Naive thymus-derived CD4-positive, alpha-beta T cell (primary cell): ENCODE measurements at regions of chr3 and their contacts with region 1.

Region 1: DNA sequence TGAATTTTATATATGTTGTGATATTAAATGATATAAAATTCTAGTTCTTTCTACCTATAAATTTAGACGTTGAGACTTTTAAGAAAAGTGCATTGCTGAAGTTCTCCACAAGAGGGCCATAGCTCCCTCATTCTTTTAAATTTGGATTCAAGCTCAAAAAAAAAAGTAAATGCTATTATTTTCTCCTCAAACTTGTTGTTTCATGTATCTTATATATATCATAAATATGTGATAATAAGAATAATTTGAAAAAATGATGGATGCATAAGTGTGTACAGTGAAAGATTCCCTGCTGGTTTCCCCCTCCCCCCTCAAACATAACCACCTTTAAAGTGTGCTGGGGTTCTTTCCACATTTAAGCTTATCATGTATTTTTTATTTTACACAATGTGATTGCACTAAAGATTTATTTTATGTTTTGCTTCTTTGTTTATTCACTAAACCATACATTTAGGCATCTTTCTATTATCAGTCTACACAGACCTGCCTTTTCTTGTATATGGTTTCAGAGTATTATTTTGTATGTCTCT is 769.4 kb upstream of the GOLIM4 start:
- DNase-seq: no peak
- ATAC-seq: no peak
- H3K4me3 ChIP-seq: no peak overlapping the region
- H3K4me3 Mint-ChIP-seq: no peak overlapping the region
- H3K27ac ChIP-seq: no peak overlapping the region
- H3K27ac Mint-ChIP-seq: no peak overlapping the region
- H3K4me1 ChIP-seq: no peaks in the 10 kb centered on the region
- H3K4me1 Mint-ChIP-seq: peaks cover 0 to 1% (median 0%) of the 10 kb centered on the region in 7 donors
- H3K27me3 ChIP-seq: no peaks in the 10 kb centered on the region
- H3K27me3 Mint-ChIP-seq: no peaks in the 10 kb centered on the region

Region 2: DNA sequence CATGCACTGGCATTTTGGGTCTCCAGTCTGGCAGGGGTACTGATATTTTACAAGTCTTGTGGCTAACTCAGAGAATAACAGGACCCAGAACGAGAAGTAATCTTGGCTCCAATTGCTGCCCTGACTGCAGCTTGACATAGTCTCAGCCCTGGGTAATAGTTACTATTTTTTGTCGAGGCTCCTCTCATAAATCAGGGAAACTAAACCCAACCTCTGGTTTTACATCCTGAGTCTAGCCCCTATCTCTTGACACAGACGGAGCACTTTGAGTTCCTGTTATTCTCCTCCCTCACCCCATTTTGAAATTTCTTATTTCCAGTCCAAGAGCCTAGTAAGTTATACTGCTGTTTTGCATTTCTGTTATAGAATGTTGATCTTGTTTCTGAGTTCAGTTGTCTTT is 493.2 kb before region 1 on chr3:
- CTCF ChIA-PET with region 1: no interaction called
- POLR2A ChIA-PET with region 1: no interaction called
- intact Hi-C with region 1: no loop called
- DNase-seq: no peak
- ATAC-seq: no peak
- H3K4me3 ChIP-seq: no peak overlapping the region
- H3K4me3 Mint-ChIP-seq: no peak overlapping the region
- H3K27ac ChIP-seq: no peak overlapping the region
- H3K27ac Mint-ChIP-seq: no peak overlapping the region
- H3K4me1 ChIP-seq: no peaks in the 10 kb centered on the region
- H3K4me1 Mint-ChIP-seq: no peaks in the 10 kb centered on the region
- H3K27me3 ChIP-seq: no peaks in the 10 kb centered on the region
- H3K27me3 Mint-ChIP-seq: no peaks in the 10 kb centered on the region

Region 3: DNA sequence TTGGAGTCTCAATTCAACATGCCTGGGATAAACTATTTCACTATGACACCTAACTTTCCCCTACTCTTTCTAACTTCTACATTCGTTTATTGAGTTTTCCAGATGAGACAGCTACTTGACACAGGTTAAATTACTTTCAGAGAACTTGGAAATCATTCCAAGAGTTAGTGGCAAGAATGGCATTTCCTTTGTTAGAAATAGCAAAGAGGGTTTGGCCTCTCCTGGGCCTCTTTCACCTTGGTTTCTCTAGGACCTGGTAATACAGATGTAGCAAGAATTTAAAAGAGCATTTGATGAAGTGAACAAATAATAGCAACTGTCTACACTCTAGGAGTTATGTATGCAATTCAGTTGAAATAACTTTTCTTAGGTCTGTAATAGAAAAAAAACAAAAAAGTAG is 49.6 kb after region 1 on chr3:
- CTCF ChIA-PET with region 1: no interaction called
- POLR2A ChIA-PET with region 1: no interaction called
- intact Hi-C with region 1: no loop called
- DNase-seq: no peak
- ATAC-seq: no peak
- H3K4me3 ChIP-seq: no peak overlapping the region
- H3K4me3 Mint-ChIP-seq: no peak overlapping the region
- H3K27ac ChIP-seq: no peak overlapping the region
- H3K27ac Mint-ChIP-seq: no peak overlapping the region
- H3K4me1 ChIP-seq: no peaks in the 10 kb centered on the region
- H3K4me1 Mint-ChIP-seq: no peaks in the 10 kb centered on the region
- H3K27me3 ChIP-seq: no peaks in the 10 kb centered on the region
- H3K27me3 Mint-ChIP-seq: no peaks in the 10 kb centered on the region

Region 4: GRCh38 chr3:169744366-169745054 is 879.4 kb after region 1 on chr3:
- CTCF ChIA-PET with region 1: no interaction called
- POLR2A ChIA-PET with region 1: no interaction called
- intact Hi-C with region 1: loop called in 1 of 2 experiments (anchors 5 kb)
- DNase-seq: no peak
- ATAC-seq: no peak
- H3K4me3 ChIP-seq: no peak overlapping the region
- H3K4me3 Mint-ChIP-seq: no peak overlapping the region
- H3K27ac ChIP-seq: no peak overlapping the region
- H3K27ac Mint-ChIP-seq: no peak overlapping the region
- H3K4me1 ChIP-seq: no peaks in the 10 kb centered on the region
- H3K4me1 Mint-ChIP-seq: peaks cover 0 to 11% (median 5%) of the 10 kb centered on the region in 7 donors
- H3K27me3 ChIP-seq: no peaks in the 10 kb centered on the region
- H3K27me3 Mint-ChIP-seq: peaks cover 23 to 36% (median 27%) of the 10 kb centered on the region in 5 donors